ENCODE measurements at regions of chr1 and their contacts with region 1.

Region 1: DNA sequence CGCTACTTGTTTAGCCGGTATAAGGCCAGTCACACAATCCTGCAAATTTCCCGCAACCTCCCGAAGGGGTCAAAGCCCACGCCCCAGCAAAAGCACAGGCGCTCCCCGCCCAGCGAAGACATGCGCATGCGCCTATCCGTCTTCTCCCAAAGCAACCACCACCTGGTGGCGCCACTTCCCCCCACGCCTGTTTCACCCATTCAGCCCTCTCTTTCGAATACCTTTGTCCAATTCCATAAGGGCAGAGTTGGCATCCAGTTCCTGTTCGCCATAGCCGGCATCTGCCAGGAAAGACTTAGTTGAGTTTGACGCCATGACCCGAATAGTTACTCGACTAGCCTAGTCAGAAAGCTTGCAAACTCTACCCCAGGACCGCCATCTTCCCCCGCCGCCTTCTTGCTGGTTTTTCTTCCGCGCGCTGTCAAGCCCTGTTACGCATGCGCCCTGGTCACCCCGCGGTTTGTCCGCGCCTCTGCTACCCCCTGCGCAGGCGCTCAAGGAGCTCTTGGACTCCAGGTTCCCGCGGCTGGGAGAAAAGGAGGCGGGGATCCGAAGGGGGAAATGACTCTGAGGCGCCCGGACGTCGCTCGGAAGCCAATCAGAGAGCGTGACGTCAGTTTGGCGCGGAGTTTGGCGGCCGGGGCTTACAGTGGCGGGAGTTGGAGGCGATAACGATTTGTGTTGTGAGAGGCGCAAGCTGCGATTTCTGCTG is at the starts of genes DTL and INTS7:
- DNase-seq: peak; percentile 99
- ATAC-seq: peak; percentile 87 to 92
- H3K4me3 ChIP-seq: peak within 1 kb of the TSS; percentile 65
- H3K27ac ChIP-seq: peak within 1 kb of the TSS; percentile 85 to 90
- H3K4me1 ChIP-seq: peaks cover 72% of the 10 kb centered on the region
- CTCF ChIP-seq: peak; percentile 94
- EP300 ChIP-seq: no peak
- POLR2A ChIP-seq: peak; percentile 73
- RAD21 ChIP-seq: peak in 1 of 2 experiments; percentile 30; a peak in 2 of 5 replicates
- polyA plus RNA-seq, gene DTL: 28.5 and 30.2 TPM in 2 replicates
- polyA plus RNA-seq, gene INTS7: 47.2 and 61.8 TPM in 2 replicates

Region 2: DNA sequence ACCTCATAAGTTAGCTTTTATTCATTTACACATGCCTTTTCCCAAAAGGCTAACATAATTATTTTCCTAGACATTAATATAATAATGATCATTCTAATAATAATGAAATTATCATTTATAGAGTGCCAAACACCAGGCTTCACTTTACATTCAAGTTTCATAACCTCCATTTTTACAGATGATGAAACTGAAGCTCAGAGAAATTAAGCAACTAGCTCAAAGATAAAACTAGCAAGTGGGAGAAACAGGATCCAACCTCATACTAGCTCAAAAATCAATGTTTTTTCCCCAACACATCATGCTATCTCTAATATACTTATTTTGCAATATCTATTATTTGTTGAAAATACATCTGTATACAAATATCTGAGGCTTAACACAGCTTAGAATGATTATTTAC is 218.7 kb before region 1 on chr1:
- CTCF ChIA-PET with region 1: no interaction called
- POLR2A ChIA-PET with region 1: no interaction called
- DNase-seq: no peak
- ATAC-seq: no peak
- H3K4me3 ChIP-seq: no peak overlapping the region
- H3K27ac ChIP-seq: no peak overlapping the region
- H3K4me1 ChIP-seq: peaks cover 11% of the 10 kb centered on the region; the same call in 2 of the 3 replicates
- CTCF ChIP-seq: no peak
- EP300 ChIP-seq: no peak
- POLR2A ChIP-seq: no peak
- RAD21 ChIP-seq: no peak

Region 3: GRCh38 chr1:211944733-211945500 is 90.4 kb before region 1 on chr1:
- CTCF ChIA-PET with region 1: interaction called, 14 read pairs
- POLR2A ChIA-PET with region 1: interaction called, 5 read pairs
- DNase-seq: peak; percentile 93 to 96
- ATAC-seq: peak; percentile 99 to 100
- H3K4me3 ChIP-seq: 0 out of 3 replicates have a peak overlapping the region, but pooled peaks have one; percentile 2
- H3K27ac ChIP-seq: peak overlapping the region; percentile 79 to 84
- H3K4me1 ChIP-seq: peaks cover 30% of the 10 kb centered on the region
- CTCF ChIP-seq: peak; percentile 95
- EP300 ChIP-seq: peak; percentile 10 to 52; a peak in 2 of 5 replicates
- POLR2A ChIP-seq: no peak
- RAD21 ChIP-seq: peak; percentile 95 to 97

Region 4: GRCh38 chr1:212004895-212005608 is 30.2 kb before region 1 on chr1:
- CTCF ChIA-PET with region 1: interaction called, 47 read pairs
- POLR2A ChIA-PET with region 1: interaction called, 11 read pairs
- DNase-seq: peak in 1 of 2 experiments; percentile 23
- ATAC-seq: peak in 1 of 2 experiments; percentile 71; a peak in 3 of 6 replicates
- H3K4me3 ChIP-seq: no peak overlapping the region
- H3K27ac ChIP-seq: no peak overlapping the region
- H3K4me1 ChIP-seq: no peaks in the 10 kb centered on the region
- CTCF ChIP-seq: no peak
- EP300 ChIP-seq: no peak
- POLR2A ChIP-seq: no peak
- RAD21 ChIP-seq: no peak

Region 5: DNA sequence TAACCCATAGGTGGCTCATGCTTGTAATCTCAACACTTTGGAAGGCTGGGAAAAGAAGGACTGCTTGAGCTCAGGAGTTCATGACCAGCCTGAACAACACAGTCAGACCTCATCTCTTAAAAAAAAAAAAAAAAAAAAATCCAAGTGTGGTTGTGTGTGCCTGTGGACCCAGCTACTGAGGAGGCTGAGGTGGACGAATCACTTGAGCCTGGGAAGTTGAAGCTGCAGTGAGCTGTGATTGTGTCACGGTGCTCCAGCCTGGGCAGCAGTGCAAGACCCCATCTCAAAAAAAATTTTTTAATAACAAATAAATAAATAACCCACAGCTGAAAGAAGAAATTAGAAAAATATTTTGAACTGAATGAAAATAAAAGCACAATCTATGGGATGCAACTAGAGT is 13.7 kb before region 1 on chr1:
- CTCF ChIA-PET with region 1: interaction called, 72 read pairs
- POLR2A ChIA-PET with region 1: interaction called, 5 read pairs
- DNase-seq: no peak
- ATAC-seq: no peak
- H3K4me3 ChIP-seq: no peak overlapping the region
- H3K27ac ChIP-seq: no peak overlapping the region
- H3K4me1 ChIP-seq: peaks cover 3% of the 10 kb centered on the region
- CTCF ChIP-seq: no peak
- EP300 ChIP-seq: no peak
- POLR2A ChIP-seq: no peak
- RAD21 ChIP-seq: no peak

Region 6: DNA sequence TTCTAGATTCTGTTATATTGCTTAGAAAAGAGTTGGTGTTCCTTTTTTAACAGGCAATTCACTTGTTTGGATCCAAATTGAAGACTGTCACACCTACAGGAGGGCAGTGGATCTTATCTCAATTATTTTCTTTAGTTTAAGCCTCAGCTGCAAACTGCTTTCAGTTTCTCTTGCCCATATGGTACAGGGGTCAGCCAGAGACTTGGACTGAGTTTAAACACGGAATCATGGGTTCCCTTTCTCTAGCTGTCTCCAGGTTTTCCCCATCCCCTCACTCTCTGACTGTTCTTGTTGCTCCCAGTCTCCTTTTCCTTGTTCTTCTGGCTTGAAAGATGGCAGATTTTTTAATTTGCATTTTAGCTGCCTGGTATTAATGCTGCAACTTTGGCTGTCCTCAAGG is 18.7 kb after region 1 on chr1:
- CTCF ChIA-PET with region 1: interaction called, 58 read pairs
- POLR2A ChIA-PET with region 1: interaction called, 3 read pairs
- DNase-seq: no peak
- ATAC-seq: no peak
- H3K4me3 ChIP-seq: no peak overlapping the region
- H3K27ac ChIP-seq: no peak overlapping the region
- H3K4me1 ChIP-seq: no peaks in the 10 kb centered on the region
- CTCF ChIP-seq: no peak
- EP300 ChIP-seq: no peak
- POLR2A ChIP-seq: no peak
- RAD21 ChIP-seq: no peak

Region 7: DNA sequence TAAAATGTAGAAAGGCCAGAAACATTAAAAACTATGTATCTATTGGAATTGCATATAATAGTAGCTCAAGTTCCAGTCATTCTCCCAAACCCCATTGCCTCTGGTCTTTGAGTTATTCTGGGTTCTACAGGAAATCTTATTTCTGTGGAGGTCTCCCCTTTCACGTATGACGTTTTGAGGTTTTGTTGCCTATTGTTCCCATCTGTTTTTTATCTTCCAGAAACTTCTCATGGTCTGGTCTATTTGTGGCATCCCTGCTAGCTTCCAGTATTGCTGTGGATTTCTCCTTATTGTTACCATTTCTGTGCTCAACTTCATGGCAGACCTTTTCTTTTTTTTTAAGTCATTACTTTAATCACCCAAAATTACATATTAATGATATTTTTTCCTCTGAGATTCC is 43.5 kb after region 1 on chr1:
- CTCF ChIA-PET with region 1: no interaction called
- POLR2A ChIA-PET with region 1: no interaction called
- DNase-seq: no peak
- ATAC-seq: no peak
- H3K4me3 ChIP-seq: no peak overlapping the region
- H3K27ac ChIP-seq: no peak overlapping the region
- H3K4me1 ChIP-seq: no peaks in the 10 kb centered on the region
- CTCF ChIP-seq: no peak
- EP300 ChIP-seq: no peak
- POLR2A ChIP-seq: no peak
- RAD21 ChIP-seq: no peak

Region 8: DNA sequence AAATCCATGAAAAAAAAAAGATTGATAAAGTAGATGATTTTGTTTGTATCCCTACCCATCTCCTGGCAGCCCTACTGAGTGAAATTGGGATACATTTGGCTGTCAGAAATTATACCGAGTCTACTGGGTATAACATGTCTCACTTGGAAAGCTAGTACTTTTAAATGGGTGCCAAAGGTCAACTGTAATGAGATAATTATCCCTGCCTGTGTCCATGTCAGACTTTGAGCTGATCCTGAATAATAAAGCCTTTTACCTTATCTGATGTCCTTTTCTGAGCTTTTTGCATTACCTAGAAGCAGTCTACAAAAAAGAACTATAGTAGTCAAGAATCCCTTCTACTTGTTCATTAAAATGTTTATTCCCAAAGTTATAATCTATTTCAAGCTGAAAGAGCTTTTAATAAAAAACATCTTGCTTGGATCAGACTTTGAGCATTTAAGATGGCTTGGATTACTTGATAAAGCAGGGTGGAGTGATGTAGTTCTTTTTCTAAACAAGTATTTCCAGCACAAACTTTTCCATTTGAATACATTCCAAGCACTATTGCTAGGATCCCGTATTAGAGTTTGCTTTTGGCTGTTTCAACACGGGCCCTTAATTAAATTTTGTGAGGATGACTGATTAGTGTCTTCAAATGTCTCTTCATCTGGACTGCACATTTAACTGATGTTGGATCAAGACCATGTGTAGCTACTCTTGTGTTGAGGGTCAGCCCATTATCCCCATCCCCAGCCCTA is 69.5 kb after region 1 on chr1:
- CTCF ChIA-PET with region 1: no interaction called
- POLR2A ChIA-PET with region 1: no interaction called
- DNase-seq: no peak
- ATAC-seq: no peak
- H3K4me3 ChIP-seq: no peak overlapping the region
- H3K27ac ChIP-seq: no peak overlapping the region
- H3K4me1 ChIP-seq: no peaks in the 10 kb centered on the region
- CTCF ChIP-seq: no peak
- EP300 ChIP-seq: no peak
- POLR2A ChIP-seq: no peak
- RAD21 ChIP-seq: no peak

Region 9: DNA sequence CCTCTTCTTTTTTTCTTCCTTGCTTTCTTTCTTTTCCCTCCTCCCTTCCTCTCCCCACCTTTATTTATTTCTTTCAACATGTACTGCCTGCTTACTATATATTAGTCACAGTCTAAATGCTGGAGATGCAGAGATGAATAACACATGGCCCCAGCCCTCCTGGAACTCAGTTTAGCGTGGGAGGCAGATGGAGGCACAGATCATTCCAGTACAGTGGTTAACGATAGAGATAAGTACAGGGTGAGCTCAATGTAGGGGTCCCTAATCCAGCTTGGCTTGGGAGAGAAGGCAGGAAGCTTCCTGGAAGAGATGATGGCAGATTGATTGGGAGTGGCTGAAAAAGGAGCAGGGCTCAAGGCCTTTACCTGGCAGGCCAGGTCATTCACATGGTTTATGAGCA is 194.4 kb after region 1 on chr1:
- CTCF ChIA-PET with region 1: no interaction called
- POLR2A ChIA-PET with region 1: no interaction called
- DNase-seq: no peak
- ATAC-seq: no peak
- H3K4me3 ChIP-seq: no peak overlapping the region
- H3K27ac ChIP-seq: no peak overlapping the region
- H3K4me1 ChIP-seq: peaks cover 19% of the 10 kb centered on the region
- CTCF ChIP-seq: no peak
- EP300 ChIP-seq: no peak
- POLR2A ChIP-seq: no peak
- RAD21 ChIP-seq: no peak

Measured in A549 (cell line).